Psoas muscle (tissue), 8 donors: ENCODE measurements at regions of chr5 and their contacts with region 1.

Region 1: DNA sequence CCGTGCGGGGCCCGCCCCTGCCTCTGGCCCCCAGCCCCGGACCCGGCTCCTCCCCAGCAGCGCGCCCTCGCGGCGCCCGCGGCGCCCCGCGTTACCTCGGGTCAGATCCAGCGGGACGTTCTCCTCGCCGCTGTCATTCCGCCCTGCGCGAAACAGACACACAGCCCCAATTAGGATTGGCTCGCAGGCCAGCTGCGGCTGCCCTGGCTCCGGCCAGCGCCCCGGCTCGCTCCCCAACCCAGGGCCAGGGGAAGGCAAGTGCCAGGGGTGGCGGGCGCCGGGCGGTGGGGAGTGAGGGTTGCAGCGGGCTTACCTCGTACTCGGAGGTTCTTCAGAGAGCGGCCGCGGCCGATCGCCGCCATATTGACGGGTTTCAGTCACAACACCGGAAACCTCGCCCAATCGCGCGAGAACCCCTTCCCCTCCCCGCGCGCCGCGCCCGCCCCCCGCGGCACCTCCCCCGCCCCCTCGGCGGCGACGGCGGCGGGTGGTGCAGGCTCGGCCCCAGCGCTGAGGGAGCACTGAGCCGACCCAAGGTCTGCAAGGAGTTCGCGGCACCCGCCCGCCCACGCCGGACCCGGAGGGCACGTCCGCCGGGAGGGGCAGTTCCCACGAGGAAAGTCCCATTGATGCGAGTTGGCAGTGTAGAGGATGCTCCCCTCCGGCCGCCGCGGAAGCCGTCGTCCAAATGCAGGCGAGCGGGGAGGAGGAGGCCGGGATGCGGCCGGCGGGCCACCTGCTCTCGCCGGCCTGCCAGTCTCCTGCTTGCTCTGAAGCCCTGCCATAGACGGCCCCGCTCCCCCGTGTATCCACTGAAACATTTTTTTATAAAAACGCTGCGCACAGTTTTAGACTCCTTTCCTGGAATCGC is at the start of gene RICTOR:
- DNase-seq: peak; percentile 93 to 96
- ATAC-seq: peak; percentile 88 to 96 (median 93)
- H3K4me3 ChIP-seq: peak within 1 kb of the TSS; percentile 74
- H3K27ac ChIP-seq: peak within 1 kb of the TSS; percentile 93
- H3K4me1 ChIP-seq: peaks cover 42% of the 10 kb centered on the region
- H3K27me3 ChIP-seq: no peaks in the 10 kb centered on the region
- CTCF ChIP-seq: peak; percentile 5
- total RNA-seq, gene RICTOR: 34.0 to 46.7 (median 41.0) TPM

Region 2: GRCh38 chr5:38997591-38997990 is 76.7 kb before region 1 on chr5:
- intact Hi-C with region 1: loop called in 1 of 2 experiments (anchors 5 kb)
- DNase-seq: no peak
- ATAC-seq: peak in 2 of 4 donors; percentile 50 to 63
- H3K4me3 ChIP-seq: no peak overlapping the region
- H3K27ac ChIP-seq: peak overlapping the region; percentile 24
- H3K4me1 ChIP-seq: peaks cover 18% of the 10 kb centered on the region
- H3K27me3 ChIP-seq: no peaks in the 10 kb centered on the region
- CTCF ChIP-seq: no peak